Caco-2 (cell line): ENCODE measurements at regions of chr11 and their contacts with region 1.

Region 1: GRCh38 chr11:36258730-36259360 is 30.4 kb downstream of the COMMD9 start:
- DNase-seq: peak; percentile 73 to 76
- H3K4me3 ChIP-seq: no peak overlapping the region
- H3K4me3 Mint-ChIP-seq: no peak overlapping the region
- H3K27ac Mint-ChIP-seq: peak overlapping the region; percentile 43
- H3K4me1 ChIP-seq: peaks cover 12% of the 10 kb centered on the region; the same call in 1 of the 2 replicates
- H3K4me1 Mint-ChIP-seq: peaks cover 12% of the 10 kb centered on the region
- H3K27me3 ChIP-seq: no peaks in the 10 kb centered on the region
- H3K27me3 Mint-ChIP-seq: no peaks in the 10 kb centered on the region
- CTCF ChIP-seq: peak; percentile 62 to 79

Region 2: GRCh38 chr11:36149538-36150242 is 109.2 kb before region 1 on chr11:
- CTCF ChIA-PET with region 1: interaction called, 4 read pairs
- POLR2A ChIA-PET with region 1: no interaction called
- intact Hi-C with region 1: loop called (anchors 5 kb)
- DNase-seq: peak; percentile 79 to 87
- H3K4me3 ChIP-seq: no peak overlapping the region
- H3K4me3 Mint-ChIP-seq: peak overlapping the region; percentile 2
- H3K27ac Mint-ChIP-seq: peak overlapping the region; percentile 89
- H3K4me1 ChIP-seq: peaks cover 30% of the 10 kb centered on the region
- H3K4me1 Mint-ChIP-seq: peaks cover 15% of the 10 kb centered on the region
- H3K27me3 ChIP-seq: no peaks in the 10 kb centered on the region
- H3K27me3 Mint-ChIP-seq: no peaks in the 10 kb centered on the region
- CTCF ChIP-seq: peak; percentile 36 to 58

Region 3: GRCh38 chr11:36191941-36192340 is 66.9 kb before region 1 on chr11:
- CTCF ChIA-PET with region 1: no interaction called
- POLR2A ChIA-PET with region 1: no interaction called
- intact Hi-C with region 1: loop called (anchors 5 kb)
- DNase-seq: no peak
- H3K4me3 ChIP-seq: no peak overlapping the region
- H3K4me3 Mint-ChIP-seq: no peak overlapping the region
- H3K27ac Mint-ChIP-seq: no peak overlapping the region
- H3K4me1 ChIP-seq: peaks cover 35% of the 10 kb centered on the region
- H3K4me1 Mint-ChIP-seq: peaks cover 26% of the 10 kb centered on the region
- H3K27me3 ChIP-seq: no peaks in the 10 kb centered on the region
- H3K27me3 Mint-ChIP-seq: no peaks in the 10 kb centered on the region
- CTCF ChIP-seq: no peak